Common myeloid progenitor, CD34-positive (primary cell): ENCODE measurements at regions of chr5 and their contacts with region 1.

Region 1: DNA sequence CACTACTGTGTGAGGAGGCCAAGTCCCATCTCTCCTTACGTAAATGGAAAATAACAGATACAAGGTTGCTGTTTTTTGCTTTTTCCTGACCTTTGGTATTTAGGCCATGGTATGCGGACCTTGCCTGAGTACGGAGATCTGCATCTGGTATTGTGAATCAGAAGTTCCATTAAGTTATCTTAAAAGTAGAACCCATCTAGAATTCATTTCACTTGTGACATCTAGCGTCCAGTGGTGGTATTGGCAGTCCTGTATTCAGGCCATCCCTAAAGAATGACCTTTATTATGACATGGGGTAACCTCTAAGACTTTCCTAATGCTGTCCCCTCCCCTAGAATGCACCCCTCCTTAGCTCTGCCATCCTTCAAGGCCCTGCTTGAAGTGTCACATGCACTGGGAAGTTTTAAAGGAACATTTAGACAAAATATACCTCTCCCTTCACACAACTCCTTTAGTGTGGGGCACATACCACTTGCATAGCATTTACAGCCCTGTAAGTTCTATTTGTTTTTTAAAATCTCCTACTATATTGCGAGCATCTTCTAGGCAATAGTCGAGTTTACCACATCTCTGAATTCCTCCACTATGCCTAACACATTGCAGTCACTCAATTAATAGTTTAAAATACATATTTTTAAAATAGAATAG is 1.9 kb upstream of the SPDL1 start:
- DNase-seq: peak; percentile 51 to 70 (median 62)
- H3K4me3 ChIP-seq: no peak overlapping the region
- H3K27ac ChIP-seq: no peak overlapping the region
- H3K4me1 ChIP-seq: peaks cover 10 to 13% (median 11%) of the 10 kb centered on the region in 4 experiments
- H3K27me3 ChIP-seq: peaks cover 0 to 4% (median 0%) of the 10 kb centered on the region in 5 experiments

Region 2: GRCh38 chr5:168987543-168988300 is 594.0 kb before region 1 on chr5:
- CTCF ChIA-PET with region 1: interaction called, 18 read pairs
- POLR2A ChIA-PET with region 1: no interaction called
- DNase-seq: peak; percentile 47 to 70 (median 55)
- H3K4me3 ChIP-seq: no peak overlapping the region
- H3K27ac ChIP-seq: no peak overlapping the region
- H3K4me1 ChIP-seq: no peaks in the 10 kb centered on the region
- H3K27me3 ChIP-seq: peaks cover 0 to 15% (median 14%) of the 10 kb centered on the region in 5 experiments

Region 3: GRCh38 chr5:169450464-169450863 is 131.2 kb before region 1 on chr5:
- CTCF ChIA-PET with region 1: no interaction called
- POLR2A ChIA-PET with region 1: no interaction called
- DNase-seq: no peak
- H3K4me3 ChIP-seq: no peak overlapping the region
- H3K27ac ChIP-seq: no peak overlapping the region
- H3K4me1 ChIP-seq: no peaks in the 10 kb centered on the region
- H3K27me3 ChIP-seq: no peaks in the 10 kb centered on the region

Region 4: DNA sequence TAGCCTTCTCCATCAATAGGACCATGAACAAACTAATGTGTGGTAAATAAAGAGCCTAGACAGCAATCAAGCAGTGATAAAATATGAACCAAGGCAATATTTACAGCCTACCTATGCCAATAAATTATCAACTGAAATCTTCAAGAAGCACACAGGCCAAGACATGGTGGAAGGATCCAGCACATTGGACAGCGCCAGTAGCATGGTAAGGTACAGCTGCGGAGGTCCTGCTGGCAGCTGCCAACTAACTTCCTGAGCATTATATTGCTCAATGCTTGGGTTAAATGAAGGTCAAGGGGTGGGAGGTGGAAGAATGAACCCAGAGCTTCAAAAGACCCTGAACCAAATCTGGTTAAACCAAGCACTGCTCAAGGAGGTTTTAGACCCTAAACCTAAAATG is 14.6 kb before region 1 on chr5:
- CTCF ChIA-PET with region 1: interaction called, 12 read pairs
- POLR2A ChIA-PET with region 1: no interaction called
- DNase-seq: peak in 2 of 3 donors; percentile 36 to 43
- H3K4me3 ChIP-seq: no peak overlapping the region
- H3K27ac ChIP-seq: no peak overlapping the region
- H3K4me1 ChIP-seq: no peaks in the 10 kb centered on the region
- H3K27me3 ChIP-seq: peaks cover 7 to 19% (median 9%) of the 10 kb centered on the region in 5 experiments

Region 5: DNA sequence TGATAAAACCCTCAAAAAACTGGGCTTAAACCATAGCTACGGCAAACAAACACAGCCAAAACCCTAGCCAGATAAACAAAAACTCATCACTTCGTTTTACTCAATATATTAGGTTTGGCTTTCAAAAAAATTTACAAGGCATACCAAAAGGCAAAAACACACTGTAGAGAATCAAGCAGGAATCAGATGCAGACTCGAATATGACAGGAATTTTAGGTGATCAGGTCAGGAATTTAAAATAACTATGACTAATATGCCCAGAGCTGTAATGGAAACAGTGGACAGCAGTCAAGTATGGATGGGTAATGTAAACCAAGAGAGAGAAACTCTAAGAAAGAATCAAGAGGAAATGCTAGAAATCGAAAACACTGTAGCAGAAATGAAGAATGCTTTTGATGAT is 28.9 kb after region 1 on chr5:
- CTCF ChIA-PET with region 1: no interaction called
- POLR2A ChIA-PET with region 1: no interaction called
- DNase-seq: no peak
- H3K4me3 ChIP-seq: no peak overlapping the region
- H3K27ac ChIP-seq: no peak overlapping the region
- H3K4me1 ChIP-seq: no peaks in the 10 kb centered on the region
- H3K27me3 ChIP-seq: no peaks in the 10 kb centered on the region